B cell (primary cell): ENCODE measurements at regions of chrX and their contacts with region 1.

Region 1: GRCh38 chrX:103214870-103215424 is at the start of gene BEX4:
- DNase-seq: peak; percentile 84
- ATAC-seq: peak; percentile 92
- H3K4me3 ChIP-seq: peak within 1 kb of the TSS; percentile 8 to 75 (median 73)
- H3K4me3 Mint-ChIP-seq: peak within 1 kb of the TSS; percentile 87
- H3K27ac ChIP-seq: peak within 1 kb of the TSS; percentile 81 to 84
- H3K27ac Mint-ChIP-seq: peak within 1 kb of the TSS; percentile 91
- H3K4me1 ChIP-seq: peaks cover 5 to 8% of the 10 kb centered on the region in 2 donors
- H3K4me1 Mint-ChIP-seq: peaks cover 12% of the 10 kb centered on the region
- H3K27me3 ChIP-seq: peaks cover 0 to 3% (median 0%) of the 10 kb centered on the region in 4 experiments
- H3K27me3 Mint-ChIP-seq: no peaks in the 10 kb centered on the region
- CTCF ChIP-seq: no peak
- total RNA-seq, gene BEX4: 17.2 and 19.8 TPM in 2 replicates

Region 2: GRCh38 chrX:103101280-103102042 is 113.5 kb before region 1 on chrX:
- CTCF ChIA-PET with region 1: no interaction called
- POLR2A ChIA-PET with region 1: no interaction called
- intact Hi-C with region 1: no loop called
- DNase-seq: no peak
- ATAC-seq: no peak
- H3K4me3 ChIP-seq: no peak overlapping the region
- H3K4me3 Mint-ChIP-seq: no peak overlapping the region
- H3K27ac ChIP-seq: no peak overlapping the region
- H3K27ac Mint-ChIP-seq: no peak overlapping the region
- H3K4me1 ChIP-seq: no peaks in the 10 kb centered on the region
- H3K4me1 Mint-ChIP-seq: no peaks in the 10 kb centered on the region
- H3K27me3 ChIP-seq: no peaks in the 10 kb centered on the region
- H3K27me3 Mint-ChIP-seq: no peaks in the 10 kb centered on the region
- CTCF ChIP-seq: no peak

Region 3: GRCh38 chrX:103248553-103248952 is 33.6 kb after region 1 on chrX:
- CTCF ChIA-PET with region 1: interaction called, 6 read pairs
- POLR2A ChIA-PET with region 1: no interaction called
- intact Hi-C with region 1: loop called (anchors 1 kb)
- DNase-seq: peak; percentile 29
- ATAC-seq: no peak
- H3K4me3 ChIP-seq: no peak overlapping the region
- H3K4me3 Mint-ChIP-seq: no peak overlapping the region
- H3K27ac ChIP-seq: no peak overlapping the region
- H3K27ac Mint-ChIP-seq: no peak overlapping the region
- H3K4me1 ChIP-seq: peaks cover 0 to under 1% of the 10 kb centered on the region in 2 donors
- H3K4me1 Mint-ChIP-seq: peaks cover 2% of the 10 kb centered on the region
- H3K27me3 ChIP-seq: no peaks in the 10 kb centered on the region
- H3K27me3 Mint-ChIP-seq: peaks cover 9% of the 10 kb centered on the region
- CTCF ChIP-seq: peak; percentile 51

Region 4: DNA sequence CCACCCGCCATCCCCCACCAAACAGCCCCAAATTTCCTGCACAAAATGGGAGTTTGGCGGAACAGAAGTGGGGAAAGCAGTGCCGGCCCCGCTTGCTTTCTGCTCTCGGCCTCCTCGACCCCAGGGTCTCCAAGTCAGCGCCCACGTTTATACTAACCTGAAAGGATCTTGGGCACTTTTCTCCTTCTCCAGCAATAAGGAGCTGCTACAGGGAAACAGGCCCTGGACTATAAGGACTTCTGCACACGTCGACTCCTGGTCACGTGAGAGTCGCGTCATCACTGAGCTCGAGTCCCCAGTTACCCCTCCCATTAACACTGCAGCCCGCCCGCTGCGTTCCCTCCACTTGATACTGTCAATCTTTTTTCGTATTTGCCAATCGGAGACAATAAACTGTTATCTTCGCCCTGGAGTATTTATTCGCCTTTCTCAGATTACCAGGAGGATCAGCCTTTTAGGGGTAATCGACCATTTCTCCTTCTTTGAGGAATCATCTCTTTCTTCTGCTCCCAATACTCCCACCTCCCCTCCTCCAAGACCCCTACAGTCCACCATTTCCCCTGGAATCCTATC is 40.1 kb after region 1 on chrX and contains the start of gene TCEAL8:
- CTCF ChIA-PET with region 1: interaction called, 4 read pairs
- POLR2A ChIA-PET with region 1: interaction called, 4 read pairs
- intact Hi-C with region 1: loop called (anchors 2 kb)
- DNase-seq: peak; percentile 68
- ATAC-seq: peak; percentile 88
- H3K4me3 ChIP-seq: peak within 1 kb of the TSS; percentile 60 to 73 (median 72)
- H3K4me3 Mint-ChIP-seq: peak within 1 kb of the TSS; percentile 95
- H3K27ac ChIP-seq: peak within 1 kb of the TSS; percentile 43 to 61
- H3K27ac Mint-ChIP-seq: peak within 1 kb of the TSS; percentile 83
- H3K4me1 ChIP-seq: peaks cover 3 to 14% of the 10 kb centered on the region in 2 donors
- H3K4me1 Mint-ChIP-seq: peaks cover 18% of the 10 kb centered on the region
- H3K27me3 ChIP-seq: no peaks in the 10 kb centered on the region
- H3K27me3 Mint-ChIP-seq: no peaks in the 10 kb centered on the region
- CTCF ChIP-seq: no peak
- total RNA-seq, gene TCEAL8: 14.4 and 17.5 TPM in 2 replicates

Region 5: DNA sequence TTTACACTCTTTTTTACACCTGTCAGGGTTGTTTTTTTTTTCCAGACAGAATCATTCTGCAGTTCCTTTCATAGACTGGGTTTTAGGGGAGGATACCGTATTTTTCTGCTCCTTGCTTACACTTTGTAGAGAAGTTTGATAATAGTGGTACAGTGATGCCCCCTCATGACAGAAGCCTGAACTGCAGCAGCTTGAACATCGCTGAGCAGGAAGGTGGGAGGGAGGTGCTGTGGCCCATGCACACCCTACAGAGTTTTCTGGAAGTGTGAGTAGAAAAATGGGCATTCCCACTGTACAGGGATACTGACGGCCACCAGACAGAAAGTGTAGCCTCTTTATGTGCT is 249.8 kb after region 1 on chrX:
- CTCF ChIA-PET with region 1: interaction called, 34 read pairs
- POLR2A ChIA-PET with region 1: no interaction called
- intact Hi-C with region 1: no loop called
- DNase-seq: peak; percentile 74
- ATAC-seq: peak; percentile 92
- H3K4me3 ChIP-seq: peak overlapping the region in 4 of 5 experiments; percentile 33 to 69 (median 48)
- H3K4me3 Mint-ChIP-seq: peak overlapping the region; percentile 90
- H3K27ac ChIP-seq: no peak overlapping the region
- H3K27ac Mint-ChIP-seq: no peak overlapping the region
- H3K4me1 ChIP-seq: peaks cover 0 to 3% of the 10 kb centered on the region in 2 donors
- H3K4me1 Mint-ChIP-seq: peaks cover 6% of the 10 kb centered on the region
- H3K27me3 ChIP-seq: peaks cover 0 to 10% (median 0%) of the 10 kb centered on the region in 4 experiments
- H3K27me3 Mint-ChIP-seq: peaks cover 5% of the 10 kb centered on the region
- CTCF ChIP-seq: peak; percentile 66

Region 6: GRCh38 chrX:103488794-103489193 is 273.8 kb after region 1 on chrX:
- CTCF ChIA-PET with region 1: interaction called, 19 read pairs
- POLR2A ChIA-PET with region 1: no interaction called
- intact Hi-C with region 1: no loop called
- DNase-seq: no peak
- ATAC-seq: no peak
- H3K4me3 ChIP-seq: no peak overlapping the region
- H3K4me3 Mint-ChIP-seq: no peak overlapping the region
- H3K27ac ChIP-seq: no peak overlapping the region
- H3K27ac Mint-ChIP-seq: no peak overlapping the region
- H3K4me1 ChIP-seq: no peaks in the 10 kb centered on the region
- H3K4me1 Mint-ChIP-seq: no peaks in the 10 kb centered on the region
- H3K27me3 ChIP-seq: no peaks in the 10 kb centered on the region
- H3K27me3 Mint-ChIP-seq: no peaks in the 10 kb centered on the region
- CTCF ChIP-seq: no peak